ENCODE measurements at regions of chr17 and their contacts with region 1.

Region 1: GRCh38 chr17:42405963-42406495 is 17.0 kb downstream of the CAVIN1 start:
- DNase-seq: peak; percentile 67 to 84 (median 72)
- ATAC-seq: peak; percentile 81
- H3K4me3 ChIP-seq: no peak overlapping the region
- H3K27ac ChIP-seq: no peak overlapping the region
- H3K4me1 ChIP-seq: peaks cover 45 to 50% of the 10 kb centered on the region in 2 experiments
- H3K27me3 ChIP-seq: no peaks in the 10 kb centered on the region
- CTCF ChIP-seq: peak; percentile 89 to 91 (median 90)
- EP300 ChIP-seq: no peak
- POLR2A ChIP-seq: no peak
- RAD21 ChIP-seq: peak; percentile 74 to 86

Region 2: GRCh38 chr17:42183741-42184711 is 222.0 kb before region 1 on chr17:
- CTCF ChIA-PET with region 1: no interaction called
- POLR2A ChIA-PET with region 1: no interaction called
- in situ Hi-C with region 1: no loop called
- intact Hi-C with region 1: loop called (anchors 10 kb)
- DNase-seq: peak; percentile 91 to 98 (median 96)
- ATAC-seq: peak; percentile 81
- H3K4me3 ChIP-seq: peak overlapping the region; percentile 65
- H3K27ac ChIP-seq: peak overlapping the region; percentile 66
- H3K4me1 ChIP-seq: peaks cover 31 to 47% of the 10 kb centered on the region in 2 experiments
- H3K27me3 ChIP-seq: no peaks in the 10 kb centered on the region
- CTCF ChIP-seq: peak; percentile 78 to 92 (median 91)
- EP300 ChIP-seq: no peak
- POLR2A ChIP-seq: peak; percentile 56; the same call in 1 of the 2 replicates
- RAD21 ChIP-seq: peak; percentile 49 to 61; a peak in 3 of 4 replicates

Region 3: DNA sequence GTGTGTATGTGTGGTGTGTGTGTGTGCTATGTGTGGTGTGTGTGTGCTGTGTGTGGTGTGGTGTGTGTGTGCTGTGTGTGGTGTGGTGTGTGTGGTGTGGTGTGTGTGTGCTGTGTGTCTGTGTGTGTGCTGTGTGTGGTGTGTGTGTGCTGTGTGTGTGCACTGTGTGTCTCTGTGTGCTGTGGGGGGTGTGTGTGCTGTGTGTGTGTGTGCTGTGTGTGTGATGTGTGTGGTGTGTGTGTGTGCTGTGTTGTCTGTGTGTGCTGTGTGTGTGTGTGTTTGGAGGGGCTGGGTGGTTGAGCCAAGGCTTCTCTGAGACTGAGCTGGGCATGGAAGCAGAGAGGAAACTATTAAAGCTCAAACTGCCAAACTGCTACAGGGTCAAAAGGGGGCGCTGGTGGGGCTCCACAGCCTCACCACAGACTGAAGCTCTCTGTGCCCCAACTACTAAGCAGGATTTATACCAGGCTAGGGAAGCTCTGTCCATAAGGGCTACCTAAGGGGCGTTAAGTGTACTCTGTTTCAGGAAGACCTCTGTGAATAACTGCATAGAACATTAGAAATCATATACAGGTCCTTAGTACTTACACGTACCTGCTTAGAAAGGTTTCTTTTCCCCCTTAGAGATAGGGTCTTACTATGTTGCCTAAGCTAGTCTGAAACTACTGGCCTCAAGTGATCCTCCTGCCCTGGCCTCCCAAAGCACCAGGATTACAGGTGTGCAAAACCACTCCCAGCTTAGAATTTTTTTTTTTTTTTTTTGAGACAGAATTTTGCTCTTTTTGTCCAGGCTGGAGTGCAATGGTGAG is 183.9 kb before region 1 on chr17:
- CTCF ChIA-PET with region 1: no interaction called
- POLR2A ChIA-PET with region 1: interaction called, 5 read pairs
- in situ Hi-C with region 1: loop called (anchors 10 kb)
- intact Hi-C with region 1: loop called (anchors 10 kb)
- DNase-seq: peak; percentile 28 to 80 (median 54)
- ATAC-seq: peak; percentile 96
- H3K4me3 ChIP-seq: no peak overlapping the region
- H3K27ac ChIP-seq: peak overlapping the region; percentile 18; the same call in 1 of the 3 replicates
- H3K4me1 ChIP-seq: peaks cover 0 to 3% of the 10 kb centered on the region in 2 experiments; a peak in 1 of 5 replicates
- H3K27me3 ChIP-seq: no peaks in the 10 kb centered on the region
- CTCF ChIP-seq: peak; percentile 76 to 89 (median 81)
- EP300 ChIP-seq: no peak
- POLR2A ChIP-seq: no peak; the same call in 1 of the 2 replicates
- RAD21 ChIP-seq: peak; percentile 63 to 75

Region 4: GRCh38 chr17:42422958-42423712 is 17.1 kb after region 1 on chr17 and contains the start of gene CAVIN1:
- CTCF ChIA-PET with region 1: no interaction called
- POLR2A ChIA-PET with region 1: interaction called, 10 read pairs
- in situ Hi-C with region 1: no loop called
- intact Hi-C with region 1: no loop called
- DNase-seq: peak; percentile 93 to 99 (median 98)
- ATAC-seq: peak; percentile 88
- H3K4me3 ChIP-seq: peak within 1 kb of the TSS; percentile 64
- H3K27ac ChIP-seq: peak within 1 kb of the TSS; percentile 71
- H3K4me1 ChIP-seq: peaks cover 21 to 33% of the 10 kb centered on the region in 2 experiments; a peak in 4 of 5 replicates
- H3K27me3 ChIP-seq: no peaks in the 10 kb centered on the region
- CTCF ChIP-seq: no peak
- EP300 ChIP-seq: no peak
- POLR2A ChIP-seq: peak; percentile 88
- RAD21 ChIP-seq: no peak
- polyA plus RNA-seq, gene CAVIN1: 6.8 to 8.6 TPM

Region 5: DNA sequence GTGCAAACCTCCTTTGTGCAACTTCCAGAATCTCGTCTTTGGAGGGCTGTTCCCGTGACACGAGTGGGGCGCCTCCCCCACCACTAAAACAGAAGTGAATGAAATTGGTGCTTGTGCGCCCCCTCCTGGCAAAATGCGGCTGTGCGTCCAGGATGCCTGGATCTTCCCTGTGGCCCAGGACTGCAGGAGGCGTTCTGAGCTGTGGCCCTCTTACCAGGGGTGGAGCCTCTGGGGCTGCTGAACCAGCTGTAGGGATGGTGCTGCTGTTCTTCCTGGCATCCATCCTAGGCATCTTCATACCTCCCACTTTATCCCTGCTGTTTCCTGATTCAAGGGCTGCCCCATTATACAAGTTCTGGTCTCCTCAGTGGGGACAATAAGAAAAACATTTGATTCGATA is 111.5 kb after region 1 on chr17:
- CTCF ChIA-PET with region 1: no interaction called
- POLR2A ChIA-PET with region 1: interaction called, 5 read pairs
- in situ Hi-C with region 1: no loop called
- intact Hi-C with region 1: loop called (anchors 5 kb)
- DNase-seq: peak; percentile 85 to 94 (median 91)
- ATAC-seq: peak; percentile 80
- H3K4me3 ChIP-seq: no peak overlapping the region
- H3K27ac ChIP-seq: peak overlapping the region; percentile 86
- H3K4me1 ChIP-seq: peaks cover 51 to 63% of the 10 kb centered on the region in 2 experiments
- H3K27me3 ChIP-seq: no peaks in the 10 kb centered on the region
- CTCF ChIP-seq: peak; percentile 98
- EP300 ChIP-seq: no peak
- POLR2A ChIP-seq: no peak
- RAD21 ChIP-seq: peak; percentile 73 to 82

Region 6: GRCh38 chr17:42773290-42774035 is 367.4 kb after region 1 on chr17 and contains the start of gene VPS25:
- CTCF ChIA-PET with region 1: no interaction called
- POLR2A ChIA-PET with region 1: no interaction called
- in situ Hi-C with region 1: no loop called
- intact Hi-C with region 1: no loop called
- DNase-seq: peak; percentile 83 to 92 (median 86)
- ATAC-seq: peak; percentile 86
- H3K4me3 ChIP-seq: peak within 1 kb of the TSS; percentile 84
- H3K27ac ChIP-seq: peak within 1 kb of the TSS; percentile 85
- H3K4me1 ChIP-seq: peaks cover 27 to 40% of the 10 kb centered on the region in 2 experiments
- H3K27me3 ChIP-seq: no peaks in the 10 kb centered on the region
- CTCF ChIP-seq: peak; percentile 20 to 36 (median 33); a peak in 2 of 6 replicates
- EP300 ChIP-seq: peak; percentile 22; the same call in 1 of the 2 replicates
- POLR2A ChIP-seq: peak; percentile 95
- RAD21 ChIP-seq: peak; percentile 11 to 43; a peak in 2 of 4 replicates
- polyA plus RNA-seq, gene VPS25: 292 to 352 TPM